ENCODE measurements at regions of chr18 and their contacts with region 1.

Region 1: DNA sequence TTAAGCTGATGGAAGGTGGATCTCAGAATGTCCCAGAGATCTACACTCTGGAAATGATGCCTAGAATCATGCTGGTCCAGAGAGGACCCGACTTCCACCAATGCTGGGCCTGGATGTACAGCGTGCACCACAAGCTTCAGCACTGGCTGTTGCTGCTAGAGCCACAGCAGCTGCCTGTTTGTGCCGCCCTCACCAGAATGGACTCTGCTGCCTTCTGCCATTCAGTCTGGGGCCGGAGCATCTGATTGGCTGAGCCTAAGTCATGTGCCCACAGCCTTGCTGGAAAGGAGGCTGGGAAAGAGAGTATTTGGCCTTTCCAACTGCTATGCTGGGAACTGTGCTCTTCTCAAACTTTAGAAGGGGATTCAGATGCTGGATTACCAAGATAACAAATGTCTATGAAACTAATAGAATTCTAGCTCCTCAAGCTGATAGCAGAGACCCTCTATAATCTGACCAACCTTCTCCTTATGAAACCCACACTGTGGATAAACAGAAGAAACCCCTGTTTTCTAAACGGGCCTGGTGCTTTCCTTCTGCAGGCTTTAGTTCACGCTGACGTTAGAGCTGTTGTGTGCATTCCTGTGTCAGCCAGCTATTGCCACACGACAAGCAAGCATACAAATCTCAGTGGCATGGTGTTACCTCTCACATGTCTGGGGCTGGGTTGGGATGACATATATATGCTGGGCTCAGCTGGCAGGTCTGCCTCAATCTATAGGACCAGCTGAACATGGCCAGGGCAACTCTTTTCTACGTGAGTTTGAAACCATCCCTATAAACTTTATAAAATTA is 4.1 kb upstream of the LOXHD1 start:
- DNase-seq: peak; percentile 48
- H3K4me3 ChIP-seq: no peak overlapping the region
- H3K27ac ChIP-seq: no peak overlapping the region
- H3K4me1 ChIP-seq: no peaks in the 10 kb centered on the region
- H3K27me3 ChIP-seq: no peaks in the 10 kb centered on the region; the same call in 1 of the 2 replicates
- CTCF ChIP-seq: no peak
- EP300 ChIP-seq: no peak
- RAD21 ChIP-seq: no peak

Region 2: DNA sequence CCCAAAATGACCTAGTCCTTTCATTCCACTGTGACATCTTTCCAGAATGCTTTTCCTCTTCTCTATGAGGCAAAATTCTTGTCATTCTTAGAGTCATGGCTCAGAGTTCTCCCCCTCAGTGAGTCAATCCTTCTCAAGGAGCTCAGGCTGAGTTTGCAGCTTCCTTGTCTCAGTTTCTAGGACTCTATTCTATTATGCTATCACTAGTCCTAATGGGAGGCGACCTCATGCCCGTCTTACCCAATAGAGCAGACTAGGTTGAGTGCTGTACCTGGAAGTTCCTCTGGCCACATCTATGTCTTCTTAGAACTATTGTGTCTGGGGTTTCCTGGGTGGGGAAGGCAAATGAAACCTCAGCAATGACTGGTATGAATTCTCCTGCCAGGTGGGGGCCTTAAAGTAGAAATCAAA is 505.5 kb before region 1 on chr18:
- CTCF ChIA-PET with region 1: interaction called, 101 read pairs
- POLR2A ChIA-PET with region 1: no interaction called
- DNase-seq: no peak
- H3K4me3 ChIP-seq: no peak overlapping the region
- H3K27ac ChIP-seq: peak overlapping the region in 1 of 2 experiments; percentile 62; a peak in 2 of 4 replicates
- H3K4me1 ChIP-seq: peaks cover 13 to 18% of the 10 kb centered on the region in 2 experiments; a peak in 2 of 4 replicates
- H3K27me3 ChIP-seq: no peaks in the 10 kb centered on the region
- CTCF ChIP-seq: no peak
- EP300 ChIP-seq: peak in 1 of 2 experiments; percentile 71; a peak in 1 of 4 replicates
- RAD21 ChIP-seq: no peak

Region 3: DNA sequence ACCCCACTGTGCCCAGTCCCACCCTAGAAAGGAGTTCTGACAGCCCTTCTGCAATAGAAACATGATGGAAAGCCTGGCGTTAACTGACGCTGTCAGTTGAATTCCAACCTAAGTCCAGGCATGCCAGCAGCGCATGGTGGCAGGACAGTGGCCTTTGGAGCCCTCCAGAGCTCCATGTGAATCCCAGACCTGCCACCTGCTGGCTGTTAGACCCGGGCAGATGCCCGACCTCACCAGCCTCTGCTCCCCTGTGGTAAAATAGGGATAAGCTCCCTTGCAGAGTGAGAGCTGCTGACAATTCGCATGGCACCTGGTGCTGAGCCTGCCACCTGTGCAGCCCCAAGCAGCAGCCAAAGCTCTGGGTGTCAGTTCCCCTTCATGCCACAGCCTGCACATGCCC is 142.7 kb before region 1 on chr18:
- CTCF ChIA-PET with region 1: interaction called, 10 read pairs
- POLR2A ChIA-PET with region 1: no interaction called
- DNase-seq: peak; percentile 61
- H3K4me3 ChIP-seq: no peak overlapping the region
- H3K27ac ChIP-seq: no peak overlapping the region
- H3K4me1 ChIP-seq: no peaks in the 10 kb centered on the region
- H3K27me3 ChIP-seq: no peaks in the 10 kb centered on the region
- CTCF ChIP-seq: peak; percentile 22; the same call in 1 of the 2 replicates
- EP300 ChIP-seq: no peak
- RAD21 ChIP-seq: peak; percentile 72

Region 4: GRCh38 chr18:46632401-46633071 is 28.6 kb before region 1 on chr18:
- CTCF ChIA-PET with region 1: interaction called, 19 read pairs
- POLR2A ChIA-PET with region 1: no interaction called
- DNase-seq: no peak
- H3K4me3 ChIP-seq: no peak overlapping the region
- H3K27ac ChIP-seq: no peak overlapping the region
- H3K4me1 ChIP-seq: peaks cover 0 to 16% of the 10 kb centered on the region in 2 experiments; a peak in 1 of 4 replicates
- H3K27me3 ChIP-seq: no peaks in the 10 kb centered on the region
- CTCF ChIP-seq: no peak
- EP300 ChIP-seq: no peak
- RAD21 ChIP-seq: no peak

Region 5: DNA sequence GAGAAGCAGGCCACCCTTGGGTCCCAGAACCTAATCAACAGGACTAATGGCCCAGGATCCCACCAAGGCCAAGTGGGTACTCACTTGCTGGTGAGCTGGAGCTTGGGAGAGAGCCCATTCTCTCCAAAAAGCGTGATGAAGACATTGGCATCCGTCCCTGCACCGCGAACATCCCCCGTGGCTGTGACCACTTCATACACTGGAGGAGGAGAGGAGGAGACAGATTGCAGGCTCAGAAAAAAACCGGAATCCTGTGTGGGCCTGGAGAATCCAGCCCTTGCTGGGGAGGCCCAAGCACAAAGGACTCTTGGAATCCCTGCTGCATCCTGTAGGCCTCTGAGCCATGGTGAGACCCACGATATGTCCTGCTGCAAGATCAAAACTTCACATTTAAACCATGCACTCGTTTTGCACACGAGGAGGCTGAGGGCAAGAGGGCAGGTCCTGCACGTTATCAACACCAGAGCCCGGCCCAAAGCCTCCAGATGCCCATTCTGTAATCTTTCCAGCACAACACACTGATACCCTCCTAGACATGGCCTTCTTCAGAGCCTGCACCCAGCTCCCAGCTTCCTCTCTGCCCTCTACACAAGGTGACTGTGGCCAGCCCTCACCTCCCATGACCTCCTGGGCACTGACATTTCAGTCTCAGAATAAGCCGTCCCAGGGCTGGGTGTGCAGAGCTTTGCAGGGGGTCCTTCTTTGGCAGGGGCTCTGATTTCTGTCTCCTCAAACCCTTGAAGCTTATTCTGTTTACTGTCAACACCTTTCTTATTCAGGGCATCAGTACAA is 11.9 kb before region 1 on chr18:
- CTCF ChIA-PET with region 1: interaction called, 30 read pairs
- POLR2A ChIA-PET with region 1: interaction called, 3 read pairs
- DNase-seq: no peak
- H3K4me3 ChIP-seq: no peak overlapping the region
- H3K27ac ChIP-seq: no peak overlapping the region
- H3K4me1 ChIP-seq: no peaks in the 10 kb centered on the region
- H3K27me3 ChIP-seq: peaks cover 18% of the 10 kb centered on the region; the same call in 1 of the 2 replicates
- CTCF ChIP-seq: no peak
- EP300 ChIP-seq: no peak
- RAD21 ChIP-seq: no peak

Region 6: DNA sequence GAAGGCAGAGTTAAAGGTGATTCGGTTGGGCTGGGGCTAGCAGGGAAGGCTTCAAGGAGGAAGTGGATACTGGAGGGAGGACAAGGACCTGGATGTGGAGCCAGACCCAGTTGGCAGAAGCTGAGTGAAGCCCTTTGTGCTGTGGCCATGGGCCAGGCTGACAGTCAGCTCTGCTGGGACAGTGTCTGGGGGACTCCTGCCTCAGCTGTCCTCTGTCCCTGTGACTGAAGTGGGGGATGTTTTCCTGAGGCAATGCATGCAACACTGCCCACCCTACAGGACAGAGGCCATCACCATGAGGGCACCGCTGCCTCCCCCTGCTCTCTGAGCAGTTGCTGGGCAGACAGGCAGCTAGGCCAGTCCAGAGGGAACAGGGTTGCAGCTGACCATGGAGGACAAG is 55.7 kb after region 1 on chr18:
- CTCF ChIA-PET with region 1: no interaction called
- POLR2A ChIA-PET with region 1: no interaction called
- DNase-seq: no peak
- H3K4me3 ChIP-seq: no peak overlapping the region
- H3K27ac ChIP-seq: no peak overlapping the region
- H3K4me1 ChIP-seq: peaks cover 10% of the 10 kb centered on the region in 2 experiments; a peak in 2 of 4 replicates
- H3K27me3 ChIP-seq: no peaks in the 10 kb centered on the region; the same call in 1 of the 2 replicates
- CTCF ChIP-seq: no peak
- EP300 ChIP-seq: no peak
- RAD21 ChIP-seq: no peak